ENCODE measurements at regions of chr5 and their contacts with region 1.

Region 1: GRCh38 chr5:141691867-141692532 is 10.0 kb upstream of the ARAP3 start:
- DNase-seq: peak; percentile 87
- H3K4me3 Mint-ChIP-seq: peak overlapping the region; percentile 62
- H3K27ac Mint-ChIP-seq: peak overlapping the region; percentile 43
- H3K4me1 Mint-ChIP-seq: peaks cover 8% of the 10 kb centered on the region
- H3K27me3 Mint-ChIP-seq: peaks cover 35% of the 10 kb centered on the region
- CTCF ChIP-seq: peak; percentile 99

Region 2: DNA sequence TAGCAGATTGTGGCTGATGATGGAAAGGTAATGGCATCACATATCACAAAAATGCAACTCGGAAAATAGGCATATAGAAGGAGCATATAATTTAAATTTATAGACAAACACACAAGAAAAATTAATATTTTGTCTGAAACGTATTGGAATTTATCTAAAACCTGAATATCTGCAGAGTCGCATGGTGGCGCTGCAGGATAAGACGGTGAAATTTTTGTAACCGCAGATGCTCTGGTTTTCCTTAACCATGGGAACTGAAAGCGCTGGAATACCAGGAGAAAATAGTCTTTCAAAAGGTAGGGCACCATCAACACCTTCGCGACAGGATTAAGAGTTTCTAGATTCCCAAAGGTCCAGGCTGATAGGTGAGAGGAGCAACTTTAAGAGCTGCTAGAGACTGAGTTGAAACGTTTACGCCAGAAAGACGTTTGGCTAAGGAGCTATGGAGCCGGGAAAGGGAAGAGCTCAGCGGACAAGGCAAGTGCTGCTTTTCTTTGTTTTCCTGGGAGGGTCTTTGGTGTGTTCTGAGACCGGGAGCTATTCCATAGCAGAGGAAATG is 457.8 kb before region 1 on chr5:
- CTCF ChIA-PET with region 1: no interaction called
- POLR2A ChIA-PET with region 1: no interaction called
- intact Hi-C with region 1: no loop called
- DNase-seq: no peak
- H3K4me3 Mint-ChIP-seq: no peak overlapping the region
- H3K27ac Mint-ChIP-seq: no peak overlapping the region
- H3K4me1 Mint-ChIP-seq: no peaks in the 10 kb centered on the region
- H3K27me3 Mint-ChIP-seq: no peaks in the 10 kb centered on the region
- CTCF ChIP-seq: no peak

Region 3: GRCh38 chr5:141547488-141547887 is 144.5 kb before region 1 on chr5:
- CTCF ChIA-PET with region 1: no interaction called
- POLR2A ChIA-PET with region 1: no interaction called
- intact Hi-C with region 1: no loop called
- DNase-seq: peak; percentile 39
- H3K4me3 Mint-ChIP-seq: no peak overlapping the region
- H3K27ac Mint-ChIP-seq: no peak overlapping the region
- H3K4me1 Mint-ChIP-seq: no peaks in the 10 kb centered on the region
- H3K27me3 Mint-ChIP-seq: no peaks in the 10 kb centered on the region
- CTCF ChIP-seq: no peak

Region 4: DNA sequence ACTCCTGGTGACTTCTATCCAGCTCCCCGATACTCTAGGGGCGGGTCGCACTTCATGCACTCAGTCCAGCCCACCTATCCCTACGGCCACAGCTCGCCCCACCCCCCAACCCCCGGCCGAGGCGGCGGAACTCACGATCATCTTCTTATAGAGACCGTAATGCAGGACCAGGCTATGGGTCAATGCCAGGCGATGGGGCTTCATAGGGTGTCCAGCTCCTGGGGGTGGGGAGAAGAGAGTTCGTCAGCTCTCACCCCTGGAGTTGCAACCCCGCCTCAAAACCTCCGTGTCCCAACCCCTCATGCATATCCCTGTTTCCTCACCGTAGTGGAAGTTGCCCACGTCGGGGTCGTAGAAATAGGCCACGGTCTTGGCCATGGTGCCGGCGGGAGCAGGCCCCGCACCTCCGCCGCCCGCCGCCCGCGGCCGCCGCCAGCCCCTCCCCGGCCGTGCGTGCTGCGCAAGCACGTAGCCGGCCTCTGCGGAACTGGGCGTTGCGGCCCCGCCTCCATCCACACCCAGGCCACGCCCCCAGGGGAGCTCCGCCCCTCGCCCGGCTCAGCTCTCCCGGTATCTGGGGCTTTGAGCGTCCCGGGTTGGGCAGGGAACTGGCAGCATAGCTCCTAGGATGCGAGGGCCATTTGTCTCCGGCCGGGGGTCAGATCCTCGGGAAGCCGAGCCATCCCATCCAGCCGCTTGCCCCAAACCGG is 55.4 kb before region 1 on chr5 and contains the starts of genes HDAC3 and RELL2:
- CTCF ChIA-PET with region 1: interaction called, 10 read pairs
- POLR2A ChIA-PET with region 1: no interaction called
- intact Hi-C with region 1: no loop called
- DNase-seq: peak; percentile 95
- H3K4me3 Mint-ChIP-seq: peak within 1 kb of the TSS; percentile 92
- H3K27ac Mint-ChIP-seq: peak within 1 kb of the TSS; percentile 47
- H3K4me1 Mint-ChIP-seq: peaks cover 42% of the 10 kb centered on the region
- H3K27me3 Mint-ChIP-seq: no peaks in the 10 kb centered on the region
- CTCF ChIP-seq: no peak
- total RNA-seq, gene HDAC3: 83.5 and 85.6 TPM in 2 replicates
- total RNA-seq, gene RELL2: 12.5 and 13.3 TPM in 2 replicates

Region 5: DNA sequence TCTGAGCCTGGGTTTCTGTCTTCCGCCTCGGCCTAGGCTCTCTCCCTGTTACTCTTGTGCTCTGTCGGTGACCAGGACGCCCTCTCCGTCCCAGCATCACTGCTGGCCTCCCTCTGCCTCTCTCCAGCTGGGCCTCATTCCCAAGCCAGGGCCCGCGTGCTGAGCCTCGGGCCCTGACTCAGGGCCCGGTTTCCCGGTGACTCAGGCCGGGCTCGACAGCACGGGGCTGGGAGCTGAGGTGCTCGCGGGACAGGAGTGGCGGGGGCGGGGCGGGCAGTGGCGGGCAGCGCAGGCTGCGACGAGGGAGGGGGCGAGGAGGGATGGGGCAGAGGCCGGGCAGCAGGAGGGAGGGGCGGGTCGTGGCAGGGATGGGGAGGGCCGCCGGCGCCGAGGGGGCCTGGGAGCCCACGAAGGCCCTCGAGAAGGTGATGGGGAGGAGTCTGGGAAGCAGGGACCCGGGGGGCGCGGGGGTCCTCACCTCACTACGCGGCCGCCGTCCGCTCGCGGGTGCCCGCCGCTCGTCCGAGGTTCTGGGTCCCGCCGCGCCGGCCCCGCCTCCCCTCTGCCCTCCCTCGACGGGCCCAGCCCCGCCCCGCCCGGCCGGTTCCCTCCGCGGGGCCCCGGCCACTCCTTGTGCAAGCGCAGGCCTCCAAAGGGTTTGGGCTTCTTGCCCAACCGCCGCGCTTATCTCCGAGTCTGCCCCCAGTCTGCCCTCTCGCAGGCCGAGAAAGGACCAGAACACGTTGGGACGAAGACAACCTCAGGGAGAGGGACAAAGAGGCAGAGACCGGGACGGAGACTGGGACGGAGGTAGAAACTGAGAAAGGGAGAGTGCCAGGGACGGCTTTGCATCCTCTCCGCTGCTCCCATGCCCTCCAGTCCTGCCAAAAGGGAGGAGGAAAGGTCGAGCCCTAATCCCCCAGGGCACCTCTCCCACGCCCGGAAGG is 10.0 kb before region 1 on chr5 and contains the start of gene ARAP3:
- CTCF ChIA-PET with region 1: interaction called, 51 read pairs
- POLR2A ChIA-PET with region 1: interaction called, 12 read pairs
- intact Hi-C with region 1: no loop called
- DNase-seq: peak; percentile 93
- H3K4me3 Mint-ChIP-seq: peak within 1 kb of the TSS; percentile 76
- H3K27ac Mint-ChIP-seq: peak within 1 kb of the TSS; percentile 93
- H3K4me1 Mint-ChIP-seq: peaks cover 14% of the 10 kb centered on the region
- H3K27me3 Mint-ChIP-seq: no peaks in the 10 kb centered on the region
- CTCF ChIP-seq: no peak
- total RNA-seq, gene ARAP3: 19.8 and 22.8 TPM in 2 replicates

Region 6: DNA sequence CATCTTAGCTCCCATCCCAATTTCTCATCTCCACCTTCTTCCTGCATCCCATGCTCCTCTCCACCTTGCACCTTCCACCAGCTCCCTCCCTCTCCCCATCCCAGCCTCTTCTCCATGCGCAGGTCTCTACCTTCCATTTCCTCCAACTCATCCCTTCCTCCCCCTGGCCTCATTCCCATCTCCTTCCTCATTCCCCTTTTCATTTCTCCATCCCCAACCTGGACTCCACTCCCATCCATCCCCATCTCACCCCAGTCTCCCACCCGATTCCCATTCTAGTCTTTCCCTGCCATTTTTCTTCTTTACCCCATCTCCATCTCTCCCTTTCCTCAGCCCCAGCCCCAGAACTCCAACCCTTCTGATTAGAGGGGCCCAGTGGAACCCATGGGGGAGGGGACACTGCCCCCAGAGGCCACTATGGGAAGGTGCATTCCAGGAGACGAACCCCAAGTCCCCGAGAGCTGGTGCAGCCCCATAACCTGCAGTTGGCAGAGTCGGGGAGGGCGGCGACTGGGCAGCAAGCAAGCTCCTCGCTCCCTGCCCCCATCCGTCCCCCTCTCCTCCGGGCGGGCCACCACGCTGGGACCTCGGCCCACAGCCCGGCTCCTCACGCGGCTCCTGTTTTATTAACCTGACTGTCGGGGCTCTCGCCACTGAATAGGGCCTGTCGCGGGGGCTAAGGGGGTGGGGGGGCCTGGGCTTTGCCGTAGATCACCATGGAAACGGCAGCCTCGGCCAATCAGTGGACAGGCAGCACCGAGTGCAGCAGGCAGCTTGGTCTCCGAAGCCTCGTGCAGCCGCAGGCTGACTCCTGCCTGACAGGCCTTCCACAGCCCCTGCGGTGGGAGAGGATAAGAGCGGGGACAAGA is 119.5 kb after region 1 on chr5:
- CTCF ChIA-PET with region 1: interaction called, 34 read pairs
- POLR2A ChIA-PET with region 1: no interaction called
- intact Hi-C with region 1: loop called (anchors 2 kb)
- DNase-seq: peak; percentile 32
- H3K4me3 Mint-ChIP-seq: no peak overlapping the region
- H3K27ac Mint-ChIP-seq: no peak overlapping the region
- H3K4me1 Mint-ChIP-seq: no peaks in the 10 kb centered on the region
- H3K27me3 Mint-ChIP-seq: peaks cover 31% of the 10 kb centered on the region
- CTCF ChIP-seq: peak; percentile 74

Region 7: GRCh38 chr5:141897425-141897824 is 205.4 kb after region 1 on chr5:
- CTCF ChIA-PET with region 1: interaction called, 677 read pairs
- POLR2A ChIA-PET with region 1: interaction called, 3 read pairs
- intact Hi-C with region 1: no loop called
- DNase-seq: no peak
- H3K4me3 Mint-ChIP-seq: no peak overlapping the region
- H3K27ac Mint-ChIP-seq: no peak overlapping the region
- H3K4me1 Mint-ChIP-seq: no peaks in the 10 kb centered on the region
- H3K27me3 Mint-ChIP-seq: peaks cover 30% of the 10 kb centered on the region
- CTCF ChIP-seq: no peak

Region 8: GRCh38 chr5:141976176-141976575 is 284.2 kb after region 1 on chr5:
- CTCF ChIA-PET with region 1: interaction called, 15 read pairs
- POLR2A ChIA-PET with region 1: no interaction called
- intact Hi-C with region 1: no loop called
- DNase-seq: no peak
- H3K4me3 Mint-ChIP-seq: no peak overlapping the region
- H3K27ac Mint-ChIP-seq: peak overlapping the region; percentile 6
- H3K4me1 Mint-ChIP-seq: peaks cover 13% of the 10 kb centered on the region
- H3K27me3 Mint-ChIP-seq: no peaks in the 10 kb centered on the region
- CTCF ChIP-seq: no peak

Measured in MCF 10A (cell line).